Calu3 (cell line): ENCODE measurements at regions of chr1 and their contacts with region 1.

Region 1: DNA sequence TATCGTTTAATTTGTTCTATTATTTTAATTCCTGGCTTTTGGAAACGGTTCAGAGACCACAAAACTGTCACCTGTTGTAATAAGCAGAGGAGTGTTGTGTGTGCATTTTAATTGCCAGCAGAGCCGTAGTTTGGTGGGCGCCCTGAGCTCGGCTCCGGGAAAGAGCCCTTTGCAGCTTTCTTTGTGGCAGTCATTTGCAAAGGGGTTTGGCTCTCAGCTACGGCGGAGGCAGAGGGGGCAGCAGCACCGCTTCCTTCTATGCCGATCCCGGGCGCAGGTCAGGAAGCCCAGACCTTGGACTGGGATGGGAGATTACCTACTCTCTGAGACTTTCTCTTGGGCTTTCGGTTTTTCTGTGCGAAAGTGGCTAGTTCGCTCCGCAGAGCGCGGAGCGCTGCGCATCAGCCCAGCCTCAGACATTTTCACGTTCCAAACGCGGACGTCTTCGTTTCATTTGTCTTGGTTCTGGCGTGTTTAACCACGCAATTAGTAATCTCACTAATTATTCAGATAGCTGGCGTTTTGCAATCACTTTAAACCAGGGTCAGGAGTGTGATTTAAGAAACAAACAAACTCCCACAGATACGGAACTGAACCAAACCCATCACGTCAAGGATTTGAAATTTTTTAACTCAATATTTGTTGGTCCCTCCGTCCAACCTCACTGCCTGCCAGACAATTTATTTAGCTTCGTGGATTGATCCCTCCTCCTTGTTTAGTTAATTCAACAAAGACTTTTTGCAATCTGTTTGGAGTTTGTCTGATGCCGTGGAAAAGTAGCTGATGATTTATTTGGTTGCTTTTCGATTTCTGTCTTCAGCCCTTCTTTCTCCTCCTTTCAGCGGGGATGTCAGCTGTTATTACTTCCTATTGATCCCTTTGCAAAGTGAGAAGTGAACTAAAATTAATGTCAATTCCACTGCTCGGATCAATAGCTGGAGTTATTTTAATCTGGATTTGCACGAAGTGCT is 3.9 kb downstream of the RNF220 start:
- DNase-seq: no peak
- H3K4me3 Mint-ChIP-seq: no peak overlapping the region
- H3K27ac Mint-ChIP-seq: no peak overlapping the region
- H3K4me1 Mint-ChIP-seq: no peaks in the 10 kb centered on the region
- H3K27me3 Mint-ChIP-seq: no peaks in the 10 kb centered on the region
- CTCF ChIP-seq: no peak

Region 2: GRCh38 chr1:44437107-44437716 is 28.3 kb after region 1 on chr1:
- CTCF ChIA-PET with region 1: no interaction called
- intact Hi-C with region 1: loop called (anchors 2 kb)
- DNase-seq: peak; percentile 35
- H3K4me3 Mint-ChIP-seq: no peak overlapping the region
- H3K27ac Mint-ChIP-seq: no peak overlapping the region
- H3K4me1 Mint-ChIP-seq: peaks cover 9% of the 10 kb centered on the region
- H3K27me3 Mint-ChIP-seq: peaks cover 29% of the 10 kb centered on the region
- CTCF ChIP-seq: no peak